ENCODE measurements at regions of chr18 and their contacts with region 1.

Region 1: DNA sequence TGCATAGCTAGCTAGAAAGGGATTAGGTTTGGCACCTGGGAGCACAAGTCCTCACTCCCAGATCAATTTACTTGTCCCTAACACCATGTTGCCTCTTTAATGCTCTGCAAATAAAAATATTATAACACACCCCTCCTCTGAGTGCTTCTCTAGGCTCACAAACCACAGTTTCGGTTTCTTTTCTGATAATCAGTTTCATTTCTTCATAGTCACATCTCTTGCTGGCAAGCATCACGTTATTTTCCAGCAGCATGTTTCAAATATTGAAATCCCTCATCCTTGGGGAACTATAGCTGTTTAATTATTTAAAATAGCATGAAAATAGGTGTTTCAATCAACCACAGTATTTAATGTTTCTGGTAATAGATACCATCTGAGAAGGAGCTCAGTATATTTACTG is 13.9 kb upstream of the SMCHD1 start:
- DNase-seq: no peak
- ATAC-seq: peak; percentile 71
- H3K4me3 Mint-ChIP-seq: peak overlapping the region; percentile 63
- H3K27ac Mint-ChIP-seq: no peak overlapping the region
- H3K4me1 Mint-ChIP-seq: peaks cover 51% of the 10 kb centered on the region
- H3K27me3 Mint-ChIP-seq: no peaks in the 10 kb centered on the region

Region 2: GRCh38 chr18:2589345-2590068 is 52.1 kb before region 1 on chr18:
- CTCF ChIA-PET with region 1: no interaction called
- POLR2A ChIA-PET with region 1: interaction called, 3 read pairs
- intact Hi-C with region 1: loop called in 1 of 2 experiments (anchors 5 kb)
- DNase-seq: no peak
- ATAC-seq: peak; percentile 78
- H3K4me3 Mint-ChIP-seq: peak overlapping the region; percentile 43
- H3K27ac Mint-ChIP-seq: peak overlapping the region; percentile 93
- H3K4me1 Mint-ChIP-seq: peaks cover 44% of the 10 kb centered on the region
- H3K27me3 Mint-ChIP-seq: no peaks in the 10 kb centered on the region

Region 3: DNA sequence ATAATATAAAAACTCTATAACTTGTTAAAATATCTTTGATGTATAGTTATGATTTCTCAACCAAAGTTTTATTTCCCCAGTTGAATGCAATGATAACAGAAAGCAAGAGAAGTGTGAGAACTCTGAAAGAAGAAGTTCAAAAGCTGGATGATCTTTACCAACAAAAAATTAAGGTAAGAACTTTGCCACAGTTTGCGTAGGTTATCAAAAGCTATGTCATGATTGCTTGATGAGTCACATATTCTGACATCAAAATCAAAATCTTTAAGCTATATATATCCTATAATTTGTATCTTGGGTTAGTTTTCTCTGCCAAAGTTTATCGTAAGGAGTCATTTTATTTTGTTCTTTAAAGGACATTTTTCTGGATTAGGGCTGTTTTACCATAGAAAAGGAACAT is 35.3 kb before region 1 on chr18:
- CTCF ChIA-PET with region 1: interaction called, 5 read pairs
- POLR2A ChIA-PET with region 1: interaction called, 5 read pairs
- intact Hi-C with region 1: loop called (anchors 1 kb)
- DNase-seq: no peak
- ATAC-seq: peak; percentile 54
- H3K4me3 Mint-ChIP-seq: peak overlapping the region; percentile 46
- H3K27ac Mint-ChIP-seq: peak overlapping the region; percentile 76
- H3K4me1 Mint-ChIP-seq: peaks cover 48% of the 10 kb centered on the region
- H3K27me3 Mint-ChIP-seq: no peaks in the 10 kb centered on the region

Region 4: DNA sequence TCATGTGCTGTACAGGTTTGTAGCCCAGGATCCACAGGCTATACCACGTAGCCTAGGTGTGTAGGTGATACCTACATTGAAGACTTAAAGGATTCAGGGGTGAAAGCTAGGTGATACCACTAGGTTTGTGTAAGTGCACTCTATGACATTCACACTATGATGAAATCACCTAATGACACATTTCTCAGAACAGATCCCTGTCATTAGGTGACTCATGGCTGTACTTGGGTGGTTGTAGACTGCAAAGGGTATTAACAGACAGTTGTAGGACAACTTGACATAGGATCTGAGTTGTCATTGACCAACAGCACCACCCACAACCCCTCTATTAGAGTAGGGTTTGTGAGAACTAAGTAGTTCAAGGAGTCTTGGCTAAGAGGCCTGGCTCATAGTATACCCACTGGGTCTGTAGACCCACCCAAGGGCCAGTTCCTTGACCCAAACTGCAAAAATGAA is 13.8 kb before region 1 on chr18:
- CTCF ChIA-PET with region 1: interaction called, 7 read pairs
- POLR2A ChIA-PET with region 1: no interaction called
- intact Hi-C with region 1: loop called (anchors 1 kb)
- DNase-seq: peak; percentile 51
- ATAC-seq: peak; percentile 98
- H3K4me3 Mint-ChIP-seq: no peak overlapping the region
- H3K27ac Mint-ChIP-seq: peak overlapping the region; percentile 63
- H3K4me1 Mint-ChIP-seq: peaks cover 33% of the 10 kb centered on the region
- H3K27me3 Mint-ChIP-seq: no peaks in the 10 kb centered on the region

Region 5: GRCh38 chr18:2787225-2787624 is 145.6 kb after region 1 on chr18:
- CTCF ChIA-PET with region 1: no interaction called
- POLR2A ChIA-PET with region 1: no interaction called
- intact Hi-C with region 1: no loop called
- DNase-seq: no peak
- ATAC-seq: no peak
- H3K4me3 Mint-ChIP-seq: no peak overlapping the region
- H3K27ac Mint-ChIP-seq: peak overlapping the region; percentile 32
- H3K4me1 Mint-ChIP-seq: peaks cover 5% of the 10 kb centered on the region
- H3K27me3 Mint-ChIP-seq: no peaks in the 10 kb centered on the region

Region 6: DNA sequence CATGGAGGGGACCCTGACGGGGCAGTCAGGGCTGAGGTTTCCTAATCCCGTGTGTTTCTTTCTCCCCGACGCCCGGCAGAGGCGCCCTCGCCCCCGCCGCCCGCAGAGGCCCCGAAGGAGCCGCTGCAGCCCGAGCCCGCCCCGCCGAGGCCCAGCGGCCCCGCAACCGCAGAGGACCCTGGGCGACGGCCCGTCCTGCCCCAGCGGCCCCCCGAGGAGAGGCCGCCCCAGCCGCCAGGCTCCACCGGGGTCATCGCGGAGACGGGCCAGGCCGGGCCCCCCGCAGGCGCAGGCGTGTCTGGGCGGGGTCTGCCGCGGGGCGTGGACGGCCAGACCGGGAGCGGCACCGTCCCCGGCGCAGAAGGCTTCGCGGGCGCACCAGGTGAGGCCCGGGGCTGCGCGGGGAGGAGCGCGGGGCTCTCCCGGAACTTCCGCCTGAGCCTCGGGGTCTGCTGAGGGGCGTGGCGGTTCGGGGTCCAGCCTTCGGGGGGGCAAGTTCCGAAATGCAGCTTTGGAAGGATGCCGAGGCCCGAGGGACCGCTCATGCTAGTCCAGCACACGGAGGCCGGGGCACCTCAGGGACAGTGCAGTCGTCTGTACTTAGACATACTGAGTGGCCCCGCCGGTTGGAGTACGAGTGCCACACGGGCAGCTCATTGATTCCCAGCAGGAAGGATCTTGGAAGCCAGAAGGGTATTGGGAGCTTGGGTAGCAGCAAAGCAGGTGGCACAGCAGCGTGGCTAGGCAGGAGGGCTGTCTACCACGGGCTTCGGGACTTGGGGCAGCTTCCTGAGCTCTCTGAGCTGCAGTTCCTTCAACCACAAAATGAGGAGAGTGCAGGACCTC is 265.3 kb after region 1 on chr18:
- CTCF ChIA-PET with region 1: no interaction called
- POLR2A ChIA-PET with region 1: no interaction called
- intact Hi-C with region 1: no loop called
- DNase-seq: peak; percentile 63
- ATAC-seq: peak; percentile 67
- H3K4me3 Mint-ChIP-seq: peak overlapping the region; percentile 78
- H3K27ac Mint-ChIP-seq: peak overlapping the region; percentile 72
- H3K4me1 Mint-ChIP-seq: peaks cover 17% of the 10 kb centered on the region
- H3K27me3 Mint-ChIP-seq: no peaks in the 10 kb centered on the region

Measured in activated CD4-positive, alpha-beta T cell treated with anti-CD3 and anti-CD28 coated beads for 36 hours (primary cell).